A673 (cell line): ENCODE measurements at regions of chr2 and their contacts with region 1.

Region 1: GRCh38 chr2:138090330-138090729 is 126.1 kb downstream of the HNMT start:
- DNase-seq: peak; percentile 35
- H3K4me3 ChIP-seq: no peak overlapping the region
- H3K27ac ChIP-seq: no peak overlapping the region
- H3K4me1 ChIP-seq: no peaks in the 10 kb centered on the region
- H3K27me3 ChIP-seq: no peaks in the 10 kb centered on the region
- CTCF ChIP-seq: peak; percentile 61

Region 2: GRCh38 chr2:137888845-137889244 is 201.5 kb before region 1 on chr2:
- CTCF ChIA-PET with region 1: interaction called, 3 read pairs
- POLR2A ChIA-PET with region 1: no interaction called
- intact Hi-C with region 1: loop called (anchors 10 kb)
- DNase-seq: peak; percentile 51
- H3K4me3 ChIP-seq: no peak overlapping the region
- H3K27ac ChIP-seq: no peak overlapping the region
- H3K4me1 ChIP-seq: no peaks in the 10 kb centered on the region
- H3K27me3 ChIP-seq: no peaks in the 10 kb centered on the region
- CTCF ChIP-seq: peak; percentile 68

Region 3: GRCh38 chr2:137947728-137948336 is 142.5 kb before region 1 on chr2:
- CTCF ChIA-PET with region 1: no interaction called
- POLR2A ChIA-PET with region 1: no interaction called
- intact Hi-C with region 1: loop called (anchors 1 kb)
- DNase-seq: peak; percentile 65
- H3K4me3 ChIP-seq: no peak overlapping the region
- H3K27ac ChIP-seq: no peak overlapping the region
- H3K4me1 ChIP-seq: no peaks in the 10 kb centered on the region
- H3K27me3 ChIP-seq: no peaks in the 10 kb centered on the region
- CTCF ChIP-seq: peak; percentile 69